ENCODE measurements at regions of chr18 and their contacts with region 1.

Region 1: GRCh38 chr18:30613467-30613801 is 429.1 kb downstream of the DSC3 start:
- DNase-seq: no peak
- H3K4me3 Mint-ChIP-seq: no peak overlapping the region
- H3K27ac Mint-ChIP-seq: no peak overlapping the region
- H3K4me1 Mint-ChIP-seq: no peaks in the 10 kb centered on the region
- H3K27me3 Mint-ChIP-seq: no peaks in the 10 kb centered on the region

Region 2: DNA sequence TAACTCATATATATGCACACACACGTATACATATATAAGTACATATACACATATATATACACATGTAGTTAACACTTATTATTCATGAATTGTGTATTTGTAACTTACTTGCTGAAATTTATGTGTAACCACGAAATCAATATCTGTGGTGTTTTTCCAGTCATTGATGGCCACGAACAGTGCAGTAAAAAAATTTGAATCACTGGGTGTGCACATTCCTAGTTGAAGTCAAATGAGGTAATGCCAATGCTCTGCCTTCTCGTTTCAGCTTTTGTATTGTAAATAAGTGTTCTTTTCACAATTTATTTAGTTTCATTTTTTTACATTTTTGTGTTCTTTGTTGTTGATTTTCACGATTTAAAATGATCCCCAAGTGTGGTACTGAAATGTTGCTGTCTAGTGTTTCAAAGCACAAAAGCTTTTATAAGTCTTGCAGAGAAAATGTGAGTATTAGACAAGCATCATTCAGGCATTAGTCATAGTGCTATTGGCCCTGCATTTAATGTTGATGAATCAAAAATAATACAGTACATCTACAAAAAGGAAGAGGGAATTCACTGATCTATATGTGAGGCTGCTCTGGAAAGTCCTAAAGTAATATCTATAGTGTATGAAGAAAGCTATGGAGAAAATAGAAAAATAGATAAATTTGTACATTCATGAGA is 10.1 kb after region 1 on chr18:
- CTCF ChIA-PET with region 1: no interaction called
- POLR2A ChIA-PET with region 1: no interaction called
- DNase-seq: no peak
- H3K4me3 Mint-ChIP-seq: no peak overlapping the region
- H3K27ac Mint-ChIP-seq: no peak overlapping the region
- H3K4me1 Mint-ChIP-seq: no peaks in the 10 kb centered on the region
- H3K27me3 Mint-ChIP-seq: no peaks in the 10 kb centered on the region

Region 3: DNA sequence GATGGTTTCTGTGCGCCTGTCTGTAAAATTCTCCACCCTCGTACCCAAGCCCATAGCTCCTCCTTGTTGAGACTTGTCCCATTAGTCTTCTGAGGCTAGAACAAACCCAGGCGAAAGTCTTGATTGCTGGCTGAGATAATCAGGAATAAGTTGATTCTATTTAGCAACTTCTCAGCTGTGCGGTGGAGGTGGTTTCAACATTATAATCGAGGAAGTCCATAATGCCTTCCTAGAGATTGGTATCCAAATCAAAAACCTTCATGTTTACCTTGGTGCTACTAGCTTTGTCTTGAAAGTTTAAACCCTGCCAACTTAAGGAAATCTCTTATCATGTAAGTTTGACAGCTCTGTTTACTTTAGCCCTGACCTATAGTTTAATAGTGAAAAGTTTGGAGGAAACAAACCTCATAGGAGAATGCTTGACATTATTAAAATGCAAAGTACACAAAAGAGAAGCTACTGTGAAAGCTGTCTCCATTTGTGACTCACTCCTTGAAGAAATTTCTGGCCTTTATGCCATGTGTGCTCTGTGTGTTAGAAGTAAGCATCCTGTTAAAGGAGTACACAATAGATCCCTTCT is 585.8 kb after region 1 on chr18:
- CTCF ChIA-PET with region 1: no interaction called
- POLR2A ChIA-PET with region 1: interaction called, 10 read pairs
- DNase-seq: no peak
- H3K4me3 Mint-ChIP-seq: no peak overlapping the region
- H3K27ac Mint-ChIP-seq: no peak overlapping the region
- H3K4me1 Mint-ChIP-seq: no peaks in the 10 kb centered on the region
- H3K27me3 Mint-ChIP-seq: no peaks in the 10 kb centered on the region